ENCODE measurements at regions of chr6 and their contacts with region 1.

Region 1: GRCh38 chr6:53410508-53411258 is 61.9 kb upstream of the ELOVL5 start:
- DNase-seq: peak; percentile 24 to 74 (median 49)
- H3K4me3 ChIP-seq: no peak overlapping the region
- H3K4me3 Mint-ChIP-seq: no peak overlapping the region
- H3K27ac ChIP-seq: no peak overlapping the region
- H3K27ac Mint-ChIP-seq: no peak overlapping the region
- H3K4me1 ChIP-seq: no peaks in the 10 kb centered on the region
- H3K4me1 Mint-ChIP-seq: peaks cover 0 to 5% (median 3%) of the 10 kb centered on the region in 3 donors
- H3K27me3 ChIP-seq: no peaks in the 10 kb centered on the region
- H3K27me3 Mint-ChIP-seq: no peaks in the 10 kb centered on the region

Region 2: DNA sequence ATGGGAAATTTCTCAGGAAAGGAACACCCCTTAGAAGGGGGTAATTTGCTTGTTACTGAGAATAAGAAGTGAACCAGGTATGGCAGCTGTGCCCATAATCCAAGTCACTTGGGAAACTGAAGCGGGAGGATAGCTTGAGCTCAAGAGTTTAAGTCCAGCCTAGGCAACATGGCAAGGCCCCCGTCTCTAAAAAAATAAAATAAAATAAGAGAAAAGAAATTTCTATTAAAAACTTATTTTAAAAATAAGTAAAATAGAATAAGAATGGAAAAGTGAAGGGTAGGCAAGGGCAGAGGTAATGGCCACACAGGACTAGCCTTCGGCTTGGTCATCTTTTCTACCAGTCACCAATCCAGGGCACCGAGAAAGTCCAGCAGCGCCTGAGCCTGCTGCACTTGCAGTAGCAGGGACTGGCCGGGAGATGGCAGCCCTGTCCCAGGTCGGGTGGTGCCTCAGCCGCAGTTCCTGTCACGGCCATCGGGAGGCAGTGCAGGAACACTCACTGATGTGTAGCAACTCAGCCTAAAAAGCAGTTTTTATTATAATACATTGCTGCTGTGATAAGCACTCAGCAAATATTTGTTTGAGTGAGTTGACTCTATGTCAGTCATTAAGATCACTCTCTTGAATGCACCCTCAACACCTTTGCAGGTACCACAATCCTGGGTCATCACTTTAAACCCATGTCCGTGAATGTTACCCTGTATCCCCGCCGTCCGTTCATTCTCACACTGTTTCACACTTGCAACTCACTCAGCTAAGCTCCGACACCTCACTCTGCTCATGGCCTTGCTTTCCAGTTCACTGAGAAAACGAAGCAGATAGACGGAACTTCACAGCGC is 238.9 kb before region 1 on chr6:
- CTCF ChIA-PET with region 1: interaction called, 76 read pairs
- POLR2A ChIA-PET with region 1: no interaction called
- DNase-seq: peak; percentile 81 to 92 (median 87)
- H3K4me3 ChIP-seq: no peak overlapping the region
- H3K4me3 Mint-ChIP-seq: no peak overlapping the region
- H3K27ac ChIP-seq: no peak overlapping the region
- H3K27ac Mint-ChIP-seq: no peak overlapping the region
- H3K4me1 ChIP-seq: no peaks in the 10 kb centered on the region
- H3K4me1 Mint-ChIP-seq: no peaks in the 10 kb centered on the region
- H3K27me3 ChIP-seq: no peaks in the 10 kb centered on the region
- H3K27me3 Mint-ChIP-seq: no peaks in the 10 kb centered on the region

Region 3: GRCh38 chr6:53294095-53294494 is 116.6 kb before region 1 on chr6:
- CTCF ChIA-PET with region 1: interaction called, 11 read pairs
- POLR2A ChIA-PET with region 1: no interaction called
- DNase-seq: peak in 2 of 5 donors; percentile 46 to 51
- H3K4me3 ChIP-seq: no peak overlapping the region
- H3K4me3 Mint-ChIP-seq: no peak overlapping the region
- H3K27ac ChIP-seq: no peak overlapping the region
- H3K27ac Mint-ChIP-seq: peak overlapping the region; percentile 0 to 95 (median 60)
- H3K4me1 ChIP-seq: peaks cover 66% of the 10 kb centered on the region
- H3K4me1 Mint-ChIP-seq: peaks cover 83 to 98% (median 96%) of the 10 kb centered on the region in 3 donors
- H3K27me3 ChIP-seq: no peaks in the 10 kb centered on the region
- H3K27me3 Mint-ChIP-seq: no peaks in the 10 kb centered on the region

Region 4: GRCh38 chr6:53330137-53330536 is 80.5 kb before region 1 on chr6:
- CTCF ChIA-PET with region 1: no interaction called
- POLR2A ChIA-PET with region 1: no interaction called
- DNase-seq: no peak
- H3K4me3 ChIP-seq: no peak overlapping the region
- H3K4me3 Mint-ChIP-seq: no peak overlapping the region
- H3K27ac ChIP-seq: no peak overlapping the region
- H3K27ac Mint-ChIP-seq: peak overlapping the region in 1 of 8 donors; percentile 9
- H3K4me1 ChIP-seq: peaks cover 72% of the 10 kb centered on the region
- H3K4me1 Mint-ChIP-seq: peaks cover 86 to 93% (median 86%) of the 10 kb centered on the region in 3 donors
- H3K27me3 ChIP-seq: no peaks in the 10 kb centered on the region
- H3K27me3 Mint-ChIP-seq: no peaks in the 10 kb centered on the region

Region 5: GRCh38 chr6:53429401-53429800 is 18.7 kb after region 1 on chr6:
- CTCF ChIA-PET with region 1: interaction called, 12 read pairs
- POLR2A ChIA-PET with region 1: no interaction called
- DNase-seq: peak in 1 of 5 donors; percentile 26
- H3K4me3 ChIP-seq: no peak overlapping the region
- H3K4me3 Mint-ChIP-seq: peak overlapping the region in 4 of 7 donors; percentile 20 to 51 (median 22)
- H3K27ac ChIP-seq: no peak overlapping the region
- H3K27ac Mint-ChIP-seq: peak overlapping the region in 4 of 8 donors; percentile 14 to 75 (median 36)
- H3K4me1 ChIP-seq: peaks cover 6% of the 10 kb centered on the region
- H3K4me1 Mint-ChIP-seq: peaks cover 35 to 37% (median 36%) of the 10 kb centered on the region in 3 donors
- H3K27me3 ChIP-seq: no peaks in the 10 kb centered on the region
- H3K27me3 Mint-ChIP-seq: peaks cover 0 to 3% of the 10 kb centered on the region in 2 donors

Region 6: DNA sequence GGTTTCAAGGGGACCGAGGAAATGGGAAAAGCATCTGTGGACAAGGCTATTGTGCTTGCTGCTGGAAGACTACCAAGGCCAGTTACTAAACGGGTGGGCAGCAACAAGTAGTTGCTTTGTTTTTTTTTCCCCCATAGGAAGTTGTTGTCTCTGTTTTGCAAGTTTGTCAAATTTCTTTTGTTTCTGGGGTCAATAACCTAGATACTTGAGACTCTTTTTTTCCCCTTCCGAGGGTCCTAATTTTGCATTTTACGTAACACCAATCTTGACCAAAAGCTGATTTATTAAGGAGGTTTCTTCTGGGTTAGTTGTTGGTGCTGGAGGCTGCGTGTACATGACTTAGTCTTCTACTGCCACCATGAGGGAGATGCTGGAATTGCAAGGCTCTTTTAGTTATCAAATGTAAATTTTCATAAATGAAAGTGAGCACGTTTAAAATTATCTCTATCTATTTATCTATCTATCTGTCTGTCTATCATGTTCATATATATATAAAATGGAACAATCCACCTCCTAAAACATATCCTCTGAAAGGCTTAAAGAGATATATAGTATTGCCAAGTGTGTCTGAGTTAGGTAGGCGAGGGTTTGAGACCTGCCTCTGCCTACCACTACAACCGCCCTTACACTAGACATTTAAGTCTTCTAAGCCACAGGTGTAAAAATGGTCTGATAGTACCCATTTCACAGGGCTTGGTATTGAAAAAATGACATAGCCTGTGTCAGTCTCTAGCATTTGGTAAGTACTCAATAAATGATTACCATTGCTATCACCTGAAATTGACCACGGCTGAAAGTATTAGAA is 74.0 kb after region 1 on chr6:
- CTCF ChIA-PET with region 1: interaction called, 21 read pairs
- POLR2A ChIA-PET with region 1: no interaction called
- DNase-seq: peak; percentile 50 to 71 (median 63)
- H3K4me3 ChIP-seq: no peak overlapping the region
- H3K4me3 Mint-ChIP-seq: no peak overlapping the region
- H3K27ac ChIP-seq: no peak overlapping the region
- H3K27ac Mint-ChIP-seq: no peak overlapping the region
- H3K4me1 ChIP-seq: no peaks in the 10 kb centered on the region
- H3K4me1 Mint-ChIP-seq: peaks cover 6 to 12% (median 9%) of the 10 kb centered on the region in 3 donors
- H3K27me3 ChIP-seq: no peaks in the 10 kb centered on the region
- H3K27me3 Mint-ChIP-seq: peaks cover 19 to 52% of the 10 kb centered on the region in 2 donors